Activated T-helper 1 cell treated with anti-CD3 and anti-CD28 coated beads, Interleukin-12 subunit alpha, Interleukin-12 subunit beta, Interleukin-2, Interleukin-4 antibody, amounts not matched to agents 30 ng/mL and 10 ng/mL and 1 ng/mL, durations not matched to agents 14 hours and 24 hours and 36 hours (primary cell): ENCODE measurements at regions of chr15 and their contacts with region 1.

Region 1: GRCh38 chr15:99719096-99719541 is 14.1 kb downstream of the LYSMD4 start:
- DNase-seq: no peak
- H3K4me3 Mint-ChIP-seq: no peak overlapping the region
- H3K27ac Mint-ChIP-seq: no peak overlapping the region
- H3K4me1 Mint-ChIP-seq: peaks cover 33% of the 10 kb centered on the region
- H3K27me3 Mint-ChIP-seq: no peaks in the 10 kb centered on the region

Region 2: GRCh38 chr15:99466701-99467337 is 252.3 kb before region 1 on chr15:
- intact Hi-C with region 1: no loop called
- DNase-seq: no peak
- H3K4me3 Mint-ChIP-seq: no peak overlapping the region
- H3K27ac Mint-ChIP-seq: no peak overlapping the region
- H3K4me1 Mint-ChIP-seq: peaks cover 5% of the 10 kb centered on the region
- H3K27me3 Mint-ChIP-seq: peaks cover 13% of the 10 kb centered on the region

Region 3: DNA sequence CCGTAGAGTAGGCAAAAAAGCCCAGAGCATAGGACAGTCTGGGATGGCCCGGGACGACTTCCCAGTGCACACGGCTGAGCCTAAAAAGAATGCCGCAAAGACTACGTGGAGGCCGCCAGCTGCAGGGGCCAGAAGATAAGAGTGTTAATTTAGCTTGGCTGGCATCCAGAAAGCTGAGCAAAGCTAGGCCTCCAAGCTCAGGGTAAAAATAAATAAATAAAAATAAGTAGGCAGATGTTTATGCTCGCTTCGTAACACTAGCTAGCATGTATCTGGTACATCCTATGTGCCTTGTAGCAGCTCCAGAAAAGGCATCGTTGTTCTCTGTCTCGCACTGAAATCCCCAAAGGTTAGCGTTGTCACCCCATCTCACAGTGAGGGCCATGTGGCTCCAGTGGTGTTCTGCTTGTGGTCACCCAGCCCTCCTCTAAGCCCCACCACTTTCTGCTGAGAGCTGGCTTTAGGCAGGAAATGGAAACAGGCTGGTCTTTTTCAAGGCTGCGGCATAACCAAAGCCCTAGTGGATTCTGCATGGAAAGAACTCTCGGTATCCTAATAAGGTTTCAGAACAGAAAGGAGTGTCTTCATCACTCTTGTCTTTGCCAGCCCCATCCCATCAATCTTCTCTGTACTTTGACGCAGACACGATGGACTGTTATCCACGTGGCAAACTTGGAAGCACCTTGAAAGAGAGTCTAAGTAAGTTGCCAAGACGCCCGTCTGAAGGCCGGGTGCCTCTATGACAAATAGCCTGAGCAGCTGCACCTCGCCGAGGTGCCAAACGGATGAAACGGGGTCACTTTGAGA is 211.4 kb before region 1 on chr15:
- intact Hi-C with region 1: no loop called
- DNase-seq: no peak
- H3K4me3 Mint-ChIP-seq: no peak overlapping the region
- H3K27ac Mint-ChIP-seq: peak overlapping the region; percentile 6
- H3K4me1 Mint-ChIP-seq: peaks cover 55% of the 10 kb centered on the region
- H3K27me3 Mint-ChIP-seq: no peaks in the 10 kb centered on the region

Region 4: GRCh38 chr15:99733268-99734039 is 14.3 kb after region 1 on chr15 and contains the start of gene LYSMD4:
- intact Hi-C with region 1: loop called (anchors 1 kb)
- DNase-seq: peak; percentile 97
- H3K4me3 Mint-ChIP-seq: peak within 1 kb of the TSS; percentile 86
- H3K27ac Mint-ChIP-seq: peak within 1 kb of the TSS; percentile 88
- H3K4me1 Mint-ChIP-seq: peaks cover 34% of the 10 kb centered on the region
- H3K27me3 Mint-ChIP-seq: no peaks in the 10 kb centered on the region
- total RNA-seq, gene LYSMD4: 10.1 and 10.3 TPM in 2 replicates